ENCODE measurements at regions of chr13 and their contacts with region 1.

Region 1: DNA sequence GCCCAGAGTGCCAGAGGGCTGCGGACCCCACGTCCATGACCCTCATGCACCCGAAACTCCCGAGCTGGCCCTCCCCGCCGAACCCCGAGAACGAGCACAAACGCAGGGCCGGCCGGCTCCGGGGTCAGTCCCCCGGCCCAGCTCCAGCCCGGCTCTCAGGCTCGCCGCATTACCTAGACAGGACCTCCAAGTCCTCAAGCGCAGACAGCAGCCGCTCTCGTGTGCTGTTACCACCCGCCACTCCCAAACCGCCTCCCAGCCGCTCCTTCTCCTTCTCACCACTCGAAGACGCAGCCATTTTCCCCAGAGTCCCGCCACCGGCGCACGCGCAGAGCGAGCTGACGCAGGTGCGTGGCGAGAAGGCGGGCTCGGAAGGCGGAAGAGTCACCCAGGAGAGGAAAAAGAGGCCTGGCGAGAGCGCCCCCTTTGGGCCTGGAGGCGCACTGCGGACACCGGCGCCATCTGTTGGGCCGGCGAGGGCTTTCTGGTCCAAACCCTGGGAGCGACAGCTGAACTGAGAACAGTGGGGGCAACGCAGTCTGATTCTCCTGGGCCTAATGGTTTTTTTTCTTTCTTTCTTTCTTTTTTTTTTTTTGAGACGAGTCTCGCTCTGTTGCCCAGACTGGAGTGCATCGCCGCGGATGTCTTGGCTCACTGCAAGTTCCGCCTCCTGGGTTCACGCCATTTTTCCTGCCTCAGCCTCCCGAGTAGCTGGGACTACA is at the start of gene MED4:
- DNase-seq: peak; percentile 96 to 99
- ATAC-seq: peak; percentile 98
- H3K4me3 ChIP-seq: peak within 1 kb of the TSS; percentile 75 to 95
- H3K27ac ChIP-seq: peak within 1 kb of the TSS; percentile 30 to 38
- H3K4me1 ChIP-seq: no peaks in the 10 kb centered on the region
- H3K27me3 ChIP-seq: no peaks in the 10 kb centered on the region
- total RNA-seq, gene MED4: 46.1 to 46.9 TPM

Region 2: GRCh38 chr13:48037346-48038173 is 57.4 kb before region 1 on chr13 and contains the start of gene NUDT15:
- intact Hi-C with region 1: loop called (anchors 2 kb)
- DNase-seq: peak; percentile 97 to 98
- ATAC-seq: peak; percentile 100
- H3K4me3 ChIP-seq: peak within 1 kb of the TSS; percentile 70 to 91
- H3K27ac ChIP-seq: peak within 1 kb of the TSS; percentile 63 to 95
- H3K4me1 ChIP-seq: no peaks in the 10 kb centered on the region
- H3K27me3 ChIP-seq: no peaks in the 10 kb centered on the region
- total RNA-seq, gene NUDT15: 5.7 to 6.6 TPM

Region 3: DNA sequence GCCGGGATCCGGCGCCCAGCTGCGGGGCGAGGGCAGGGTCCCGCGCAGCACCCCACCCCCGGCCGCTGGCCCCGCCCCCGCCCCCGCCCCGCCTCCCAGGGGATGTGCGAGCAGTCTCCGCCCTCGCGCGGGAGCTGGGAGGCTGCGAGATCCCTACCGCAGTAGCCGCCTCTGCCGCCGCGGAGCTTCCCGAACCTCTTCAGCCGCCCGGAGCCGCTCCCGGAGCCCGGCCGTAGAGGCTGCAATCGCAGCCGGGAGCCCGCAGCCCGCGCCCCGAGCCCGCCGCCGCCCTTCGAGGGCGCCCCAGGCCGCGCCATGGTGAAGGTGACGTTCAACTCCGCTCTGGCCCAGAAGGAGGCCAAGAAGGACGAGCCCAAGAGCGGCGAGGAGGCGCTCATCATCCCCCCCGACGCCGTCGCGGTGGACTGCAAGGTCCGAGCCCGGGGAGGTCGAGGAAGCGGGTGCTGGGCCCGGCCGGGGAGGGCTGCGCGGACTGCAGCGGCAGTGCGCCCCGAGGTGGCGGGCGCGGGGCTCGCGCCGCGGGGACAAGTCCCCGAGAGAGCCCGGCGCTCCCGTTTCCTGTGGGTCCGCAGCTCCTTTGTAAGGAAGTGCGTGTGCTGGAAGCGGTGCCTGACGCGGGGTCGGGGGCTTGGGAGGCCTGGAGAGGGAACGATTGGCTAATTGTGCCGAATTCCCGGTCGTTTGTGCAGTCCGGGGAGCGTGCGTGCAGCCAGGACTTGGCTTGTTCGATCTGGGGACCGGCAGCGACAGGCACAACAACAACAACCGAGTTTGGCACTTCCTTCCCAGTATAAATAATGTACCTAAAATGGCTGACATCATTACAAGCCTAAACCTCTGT is 138.3 kb after region 1 on chr13 and contains the start of gene ITM2B:
- intact Hi-C with region 1: loop called in 1 of 2 experiments (anchors 2 kb)
- DNase-seq: peak; percentile 88 to 92
- ATAC-seq: peak; percentile 92
- H3K4me3 ChIP-seq: peak within 1 kb of the TSS; percentile 65 to 89
- H3K27ac ChIP-seq: peak within 1 kb of the TSS; percentile 90 to 98
- H3K4me1 ChIP-seq: peaks cover 0 to 12% of the 10 kb centered on the region in 2 donors
- H3K27me3 ChIP-seq: no peaks in the 10 kb centered on the region
- total RNA-seq, gene ITM2B: 549 to 771 TPM